Activated CD4-positive, alpha-beta memory T cell treated with anti-CD3 and anti-CD28 coated beads, Interleukin-2, amount 10 ng/mL, durations not matched to agents 7 days and 5 days (primary cell): ENCODE measurements at regions of chr2 and their contacts with region 1.

Region 1: GRCh38 chr2:96305091-96305978 is at the start of gene SNRNP200:
- DNase-seq: peak; percentile 93
- H3K4me3 Mint-ChIP-seq: peak within 1 kb of the TSS; percentile 100
- H3K27ac Mint-ChIP-seq: peak within 1 kb of the TSS; percentile 98
- H3K4me1 Mint-ChIP-seq: peaks cover 71% of the 10 kb centered on the region
- H3K27me3 Mint-ChIP-seq: no peaks in the 10 kb centered on the region
- total RNA-seq, gene SNRNP200: 149 to 156 TPM

Region 2: GRCh38 chr2:96315400-96316071 is 10.2 kb after region 1 on chr2:
- CTCF ChIA-PET with region 1: interaction called, 14 read pairs
- POLR2A ChIA-PET with region 1: interaction called, 244 read pairs
- DNase-seq: peak; percentile 61
- H3K4me3 Mint-ChIP-seq: peak overlapping the region; percentile 61
- H3K27ac Mint-ChIP-seq: peak overlapping the region; percentile 93
- H3K4me1 Mint-ChIP-seq: peaks cover 63% of the 10 kb centered on the region
- H3K27me3 Mint-ChIP-seq: no peaks in the 10 kb centered on the region

Region 3: GRCh38 chr2:96320728-96321622 is 15.6 kb after region 1 on chr2:
- CTCF ChIA-PET with region 1: interaction called, 14 read pairs
- POLR2A ChIA-PET with region 1: interaction called, 244 read pairs
- DNase-seq: peak; percentile 46
- H3K4me3 Mint-ChIP-seq: peak overlapping the region; percentile 80
- H3K27ac Mint-ChIP-seq: peak overlapping the region; percentile 84
- H3K4me1 Mint-ChIP-seq: peaks cover 70% of the 10 kb centered on the region
- H3K27me3 Mint-ChIP-seq: no peaks in the 10 kb centered on the region

Region 4: GRCh38 chr2:96336104-96336775 is 30.9 kb after region 1 on chr2:
- CTCF ChIA-PET with region 1: interaction called, 4 read pairs
- POLR2A ChIA-PET with region 1: interaction called, 69 read pairs
- DNase-seq: no peak
- H3K4me3 Mint-ChIP-seq: peak overlapping the region; percentile 81
- H3K27ac Mint-ChIP-seq: peak overlapping the region; percentile 73
- H3K4me1 Mint-ChIP-seq: peaks cover 66% of the 10 kb centered on the region
- H3K27me3 Mint-ChIP-seq: no peaks in the 10 kb centered on the region

Region 5: DNA sequence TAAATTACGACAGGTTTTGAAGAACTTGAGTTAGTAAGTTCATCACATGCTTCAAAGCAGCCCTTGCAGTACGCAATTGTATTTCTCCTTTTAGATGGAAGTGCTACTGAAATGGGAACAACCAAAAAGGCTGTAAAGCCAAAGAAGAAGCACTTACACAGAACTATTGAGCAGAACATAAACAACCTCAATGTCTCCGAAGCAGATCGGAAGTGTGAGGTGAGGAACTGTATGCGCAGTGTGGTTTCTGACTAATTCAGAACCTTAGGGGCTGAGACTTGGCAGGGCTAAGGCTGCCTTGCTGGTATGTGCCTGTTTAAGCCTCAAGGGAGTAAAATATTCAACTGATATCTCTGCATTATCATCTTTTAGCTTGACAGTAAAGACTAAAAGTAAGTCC is 38.7 kb after region 1 on chr2:
- CTCF ChIA-PET with region 1: interaction called, 4 read pairs
- POLR2A ChIA-PET with region 1: interaction called, 68 read pairs
- DNase-seq: peak; percentile 80
- H3K4me3 Mint-ChIP-seq: peak overlapping the region; percentile 36
- H3K27ac Mint-ChIP-seq: peak overlapping the region; percentile 92
- H3K4me1 Mint-ChIP-seq: peaks cover 75% of the 10 kb centered on the region
- H3K27me3 Mint-ChIP-seq: no peaks in the 10 kb centered on the region

Region 6: GRCh38 chr2:96396095-96396494 is 90.8 kb after region 1 on chr2:
- CTCF ChIA-PET with region 1: no interaction called
- POLR2A ChIA-PET with region 1: no interaction called
- DNase-seq: no peak
- H3K4me3 Mint-ChIP-seq: no peak overlapping the region
- H3K27ac Mint-ChIP-seq: no peak overlapping the region
- H3K4me1 Mint-ChIP-seq: no peaks in the 10 kb centered on the region
- H3K27me3 Mint-ChIP-seq: peaks cover 12% of the 10 kb centered on the region

Region 7: DNA sequence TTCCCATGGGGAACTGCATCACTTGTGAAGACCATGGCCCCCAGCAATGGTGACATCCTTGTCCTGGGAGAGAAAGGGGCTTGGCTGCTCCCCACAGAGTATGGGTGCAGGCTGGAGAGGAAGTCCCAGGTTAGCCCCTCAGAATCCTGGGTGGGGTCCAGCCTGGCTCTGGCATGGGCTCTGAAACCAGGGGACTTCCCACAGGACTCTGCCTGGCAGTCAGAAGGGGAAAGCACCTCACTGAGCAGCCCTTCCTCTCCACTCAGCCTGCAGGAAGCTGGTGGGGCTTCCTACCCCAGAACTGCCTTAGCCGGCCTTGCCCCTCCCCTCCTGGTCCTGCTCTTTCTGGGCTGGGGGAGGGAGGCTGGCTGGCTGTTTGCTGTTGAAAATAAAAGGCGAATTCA is 196.1 kb after region 1 on chr2:
- CTCF ChIA-PET with region 1: no interaction called
- POLR2A ChIA-PET with region 1: no interaction called
- DNase-seq: peak; percentile 40
- H3K4me3 Mint-ChIP-seq: no peak overlapping the region
- H3K27ac Mint-ChIP-seq: peak overlapping the region; percentile 40
- H3K4me1 Mint-ChIP-seq: peaks cover 33% of the 10 kb centered on the region
- H3K27me3 Mint-ChIP-seq: peaks cover 2% of the 10 kb centered on the region